Endothelial cell of umbilical vein (primary cell): ENCODE measurements at regions of chr11 and their contacts with region 1.

Region 1: DNA sequence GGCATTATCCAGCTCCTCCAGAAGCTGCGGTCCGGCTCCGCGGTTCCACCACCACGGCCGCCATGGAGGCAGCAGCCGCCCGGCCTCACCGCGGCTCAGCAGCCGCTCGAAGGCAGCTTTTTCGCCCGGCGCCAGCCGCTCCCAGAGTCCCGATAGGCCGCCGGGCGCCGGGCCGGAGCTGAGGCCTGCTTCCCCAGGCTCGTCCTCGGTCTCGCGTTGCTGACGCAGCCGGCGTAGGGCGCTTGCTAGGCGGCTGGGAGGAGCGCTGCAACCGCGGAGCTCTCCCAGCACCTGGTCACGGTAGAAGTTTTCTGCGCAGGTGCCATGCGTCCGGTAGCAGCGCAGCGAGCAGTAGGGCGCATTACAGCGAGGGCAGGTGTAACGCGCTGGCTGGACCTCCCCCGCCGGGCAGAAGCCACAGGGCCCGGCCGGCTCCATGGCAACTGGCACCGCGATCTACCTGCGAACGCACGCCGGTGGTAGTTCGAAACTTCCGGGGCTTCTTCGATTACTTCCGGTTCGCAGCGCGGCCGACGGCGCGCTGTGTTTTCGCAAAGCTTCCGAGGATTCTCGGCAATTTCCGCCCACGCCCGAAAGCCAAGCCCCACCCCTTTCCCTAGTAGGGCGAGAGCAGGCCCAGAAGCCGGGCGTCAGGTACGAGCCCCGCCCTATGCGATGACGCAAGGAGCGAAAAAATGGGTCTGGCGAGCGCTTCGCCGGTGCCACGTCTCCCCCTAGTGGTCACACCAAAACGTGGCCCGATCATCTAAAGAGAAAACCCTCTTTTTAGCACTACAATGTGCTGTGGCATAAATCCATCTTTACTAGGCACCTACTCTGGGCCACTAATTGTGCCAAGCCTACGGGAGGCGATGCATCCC is at the start of gene ZNHIT2:
- DNase-seq: peak; percentile 99
- H3K4me3 ChIP-seq: peak within 1 kb of the TSS; percentile 24 to 75 (median 46)
- H3K27ac ChIP-seq: peak within 1 kb of the TSS; percentile 9
- H3K4me1 ChIP-seq: peaks cover 21% of the 10 kb centered on the region
- H3K27me3 ChIP-seq: no peaks in the 10 kb centered on the region
- CTCF ChIP-seq: peak; percentile 89 to 91
- POLR2A ChIP-seq: peak; percentile 85
- total RNA-seq, gene ZNHIT2: 9.0 and 9.2 TPM in 2 replicates

Region 2: GRCh38 chr11:65083834-65084597 is 33.4 kb before region 1 on chr11 and contains the starts of genes CDCA5 and ZFPL1:
- CTCF ChIA-PET with region 1: no interaction called
- POLR2A ChIA-PET with region 1: interaction called, 6 read pairs
- dilution Hi-C with region 1: no loop called
- intact Hi-C with region 1: loop called (anchors 1 kb)
- DNase-seq: peak; percentile 96
- H3K4me3 ChIP-seq: peak within 1 kb of the TSS; percentile 58 to 92 (median 83)
- H3K27ac ChIP-seq: peak within 1 kb of the TSS; percentile 61
- H3K4me1 ChIP-seq: peaks cover 17% of the 10 kb centered on the region
- H3K27me3 ChIP-seq: no peaks in the 10 kb centered on the region
- CTCF ChIP-seq: no peak
- POLR2A ChIP-seq: no peak
- total RNA-seq, gene CDCA5: 34.1 and 35.7 TPM in 2 replicates
- total RNA-seq, gene ZFPL1: 37.6 and 45.1 TPM in 2 replicates

Region 3: DNA sequence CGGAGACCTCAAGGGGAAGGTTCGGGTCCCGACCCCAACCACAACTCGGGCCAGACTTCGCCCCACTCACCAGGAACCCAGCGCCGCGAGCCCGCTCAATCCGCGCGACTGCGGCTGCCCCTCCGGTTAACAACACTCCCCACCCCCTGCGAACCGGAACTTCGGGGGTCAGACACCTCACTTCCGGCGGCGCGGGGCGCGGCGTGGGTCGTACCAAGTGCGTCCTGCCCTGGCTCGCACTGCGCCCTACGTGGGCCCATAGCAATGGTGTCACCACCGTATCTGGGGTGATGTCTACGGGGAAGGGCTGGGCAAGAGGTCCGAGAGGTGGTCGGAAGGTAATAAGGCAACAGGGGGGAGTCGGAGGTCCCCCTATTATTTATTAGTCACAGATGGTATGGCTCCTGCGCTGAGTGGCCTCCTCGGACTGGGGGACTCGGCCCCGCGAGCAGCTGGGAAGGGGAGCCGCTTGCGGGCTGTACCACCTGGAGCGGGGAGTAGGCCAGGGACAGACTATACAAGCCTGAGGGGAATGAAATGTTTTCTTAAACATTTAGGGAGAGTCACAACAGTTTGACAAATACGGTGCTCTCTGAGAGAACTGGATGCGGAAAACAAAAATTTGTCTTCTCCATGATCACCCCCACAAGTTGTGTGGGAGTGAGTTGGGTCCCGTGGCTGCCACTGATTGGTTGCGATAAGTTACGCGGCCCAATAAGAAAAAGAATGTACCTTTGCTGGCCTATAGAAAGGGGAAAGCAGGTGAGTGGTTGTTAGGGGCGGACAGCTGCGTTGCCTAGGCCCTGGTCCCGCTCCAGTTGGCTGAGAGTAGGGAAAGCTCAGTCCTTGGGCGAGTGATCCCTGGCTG is 17.2 kb after region 1 on chr11 and contains the start of gene SYVN1:
- CTCF ChIA-PET with region 1: interaction called, 7 read pairs
- POLR2A ChIA-PET with region 1: interaction called, 7 read pairs
- dilution Hi-C with region 1: no loop called
- intact Hi-C with region 1: loop called (anchors 1 kb)
- DNase-seq: peak; percentile 97
- H3K4me3 ChIP-seq: peak within 1 kb of the TSS; percentile 51 to 62 (median 52)
- H3K27ac ChIP-seq: peak within 1 kb of the TSS; percentile 89
- H3K4me1 ChIP-seq: peaks cover 12% of the 10 kb centered on the region
- H3K27me3 ChIP-seq: no peaks in the 10 kb centered on the region
- CTCF ChIP-seq: no peak
- POLR2A ChIP-seq: peak; percentile 87
- total RNA-seq, gene SYVN1: 34.5 and 36.0 TPM in 2 replicates

Region 4: DNA sequence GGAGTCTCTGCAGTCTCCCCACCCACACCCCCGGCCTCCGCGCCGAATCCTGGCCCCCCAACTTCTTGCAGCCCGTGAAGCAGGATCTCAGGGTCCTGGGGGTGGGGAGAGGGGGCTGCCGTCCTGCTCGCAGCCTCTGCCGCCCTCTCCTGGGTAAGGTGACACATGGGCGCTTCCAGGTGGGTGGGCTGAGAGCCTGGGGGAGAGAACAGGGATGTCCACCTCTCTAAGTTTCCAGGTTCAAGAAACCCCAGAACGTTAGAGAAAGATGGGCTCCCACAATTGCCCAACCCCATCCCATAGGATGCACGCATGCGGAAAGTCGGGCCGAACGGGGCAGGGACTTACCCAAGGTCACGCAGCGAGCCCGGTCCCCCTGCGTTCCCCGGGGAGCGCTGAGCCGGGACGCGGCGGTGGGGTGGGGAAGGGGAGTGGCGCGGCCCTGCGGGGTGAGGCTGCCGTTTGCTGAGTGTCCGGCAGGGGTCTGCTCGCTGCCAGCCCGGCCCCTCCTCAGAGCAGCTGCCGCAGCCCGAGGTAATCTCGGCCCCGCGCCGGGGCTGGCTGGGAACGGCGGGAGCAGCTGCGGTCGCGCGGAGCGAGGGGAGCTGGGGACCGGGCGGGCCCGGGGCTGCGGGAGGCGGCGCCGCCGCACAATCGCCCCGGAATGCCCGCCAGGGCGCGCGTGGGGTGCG is 63.6 kb after region 1 on chr11:
- CTCF ChIA-PET with region 1: interaction called, 16 read pairs
- POLR2A ChIA-PET with region 1: interaction called, 7 read pairs
- dilution Hi-C with region 1: no loop called
- intact Hi-C with region 1: loop called (anchors 2 kb)
- DNase-seq: peak; percentile 67
- H3K4me3 ChIP-seq: peak overlapping the region; percentile 54 to 86 (median 57)
- H3K27ac ChIP-seq: peak overlapping the region; percentile 23
- H3K4me1 ChIP-seq: peaks cover 9% of the 10 kb centered on the region
- H3K27me3 ChIP-seq: no peaks in the 10 kb centered on the region
- CTCF ChIP-seq: peak; percentile 44 to 68
- POLR2A ChIP-seq: no peak